ENCODE measurements at regions of chr7 and their contacts with region 1.

Region 1: DNA sequence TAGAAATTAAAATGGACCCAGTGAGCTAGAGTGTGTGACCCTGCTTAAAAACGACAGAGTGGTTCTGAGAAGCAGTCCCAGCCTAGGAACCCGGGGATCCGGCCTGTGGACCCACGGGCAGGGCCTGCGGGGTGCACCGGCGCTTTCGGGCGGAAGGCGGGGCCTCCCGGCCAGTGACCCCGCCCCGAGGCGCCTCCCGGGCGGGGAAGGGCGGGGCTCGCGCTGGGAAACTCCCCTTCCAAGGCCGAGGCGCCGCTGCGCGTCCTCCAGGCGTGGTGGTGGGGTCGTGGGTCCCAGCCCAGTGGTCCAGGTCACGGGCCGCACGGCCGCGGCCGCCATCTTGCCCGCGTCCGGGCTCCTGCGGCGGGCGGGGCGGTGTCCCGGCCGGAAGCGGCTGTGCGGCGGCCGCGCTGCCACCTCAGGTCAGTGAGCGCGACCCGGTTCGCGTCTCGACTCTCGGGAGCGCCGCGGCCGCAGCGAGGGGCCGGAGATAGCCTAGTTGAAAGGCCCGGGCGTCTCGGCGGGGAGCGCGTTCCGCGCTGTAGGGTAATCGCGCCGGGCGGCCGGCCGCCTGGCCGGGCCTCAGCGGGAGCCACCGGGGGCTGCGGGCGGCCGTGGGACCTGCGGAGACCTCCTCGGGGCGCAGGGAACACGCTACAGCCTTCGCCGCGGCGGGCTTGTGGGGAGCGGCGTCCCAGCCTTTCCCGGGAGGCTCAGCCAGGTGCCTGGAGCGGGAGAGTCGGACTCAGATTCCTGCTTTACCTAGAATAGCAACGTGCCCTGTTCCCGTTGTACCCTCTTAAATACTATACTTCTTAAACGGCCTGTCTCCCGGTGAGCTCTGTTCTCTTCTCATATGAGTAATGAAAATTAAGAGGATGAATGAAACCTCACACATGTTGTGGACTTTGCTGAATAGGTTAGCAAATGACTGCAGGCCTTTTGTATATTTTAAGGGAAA is at the start of gene MIOS:
- DNase-seq: peak; percentile 95
- H3K4me3 Mint-ChIP-seq: no peak within 1 kb of the TSS
- H3K27ac Mint-ChIP-seq: no peak within 1 kb of the TSS
- H3K4me1 Mint-ChIP-seq: peaks cover 27% of the 10 kb centered on the region
- H3K27me3 Mint-ChIP-seq: no peaks in the 10 kb centered on the region
- CTCF ChIP-seq: no peak
- total RNA-seq, gene MIOS: 38.2 and 46.5 TPM in 2 replicates

Region 2: GRCh38 chr7:7521259-7521658 is 45.7 kb before region 1 on chr7:
- CTCF ChIA-PET with region 1: interaction called, 10 read pairs
- intact Hi-C with region 1: no loop called
- DNase-seq: no peak
- H3K4me3 Mint-ChIP-seq: no peak overlapping the region
- H3K27ac Mint-ChIP-seq: no peak overlapping the region
- H3K4me1 Mint-ChIP-seq: peaks cover 46% of the 10 kb centered on the region
- H3K27me3 Mint-ChIP-seq: no peaks in the 10 kb centered on the region
- CTCF ChIP-seq: no peak

Measured in Calu3 (cell line).